ENCODE measurements at regions of chr5 and their contacts with region 1.

Region 1: DNA sequence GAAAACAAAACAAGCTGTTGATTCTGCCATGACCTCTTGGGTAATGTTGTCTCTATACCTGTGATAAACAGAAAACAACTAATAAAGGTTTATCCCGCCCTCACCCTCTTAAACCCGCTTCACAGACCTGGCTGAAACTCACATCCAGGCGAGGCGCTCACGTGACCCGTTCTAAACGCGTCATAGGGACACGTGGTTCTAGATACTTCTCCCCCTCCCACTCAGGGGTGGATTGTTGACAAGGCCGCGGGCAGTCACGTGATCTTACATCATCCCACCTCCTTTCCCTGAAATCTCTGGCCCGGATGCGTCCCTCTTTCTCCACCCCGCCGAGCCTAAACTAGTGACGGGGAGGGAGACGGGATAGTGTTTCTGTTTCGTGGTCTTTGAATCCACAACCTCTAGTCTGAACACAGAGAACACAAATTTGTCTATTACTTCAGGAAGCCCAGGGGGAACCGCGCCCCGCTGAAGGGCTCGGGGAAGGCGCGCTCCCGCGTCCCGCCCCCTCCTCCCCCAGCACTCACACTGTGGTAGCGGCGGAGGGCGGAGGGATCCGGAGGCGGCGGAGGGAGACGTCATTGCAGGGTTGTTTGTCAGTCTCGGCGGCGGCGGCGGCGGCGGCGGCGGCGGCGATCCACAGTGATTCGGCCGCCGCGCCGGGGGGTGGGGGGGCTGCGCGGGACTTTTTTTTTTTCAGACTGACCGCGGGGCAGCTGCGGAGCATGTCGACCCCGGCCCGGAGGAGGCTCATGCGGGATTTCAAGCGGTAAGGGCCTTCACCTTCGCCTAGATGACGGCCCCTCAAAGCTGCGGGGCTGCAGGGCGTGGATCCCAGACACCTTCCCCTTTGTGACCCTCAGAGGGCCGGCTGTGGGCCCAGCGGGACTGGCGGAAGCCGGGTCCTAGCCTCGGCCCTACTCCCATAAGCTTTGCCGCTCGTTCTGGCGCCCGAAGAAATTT is at the start of gene UBE2B:
- DNase-seq: peak; percentile 97 to 99
- H3K4me3 ChIP-seq: peak within 1 kb of the TSS; percentile 79 to 89
- H3K27ac ChIP-seq: peak within 1 kb of the TSS; percentile 94 to 98
- H3K4me1 ChIP-seq: peaks cover 3 to 18% of the 10 kb centered on the region in 2 donors
- H3K27me3 ChIP-seq: no peaks in the 10 kb centered on the region
- CTCF ChIP-seq: no peak
- total RNA-seq, gene UBE2B: 42.6 TPM

Region 2: GRCh38 chr5:134225618-134226440 is 145.3 kb before region 1 on chr5 and contains the start of gene PPP2CA:
- intact Hi-C with region 1: loop called (anchors 2 kb)
- DNase-seq: peak; percentile 96 to 99
- H3K4me3 ChIP-seq: peak within 1 kb of the TSS; percentile 76 to 91
- H3K27ac ChIP-seq: peak within 1 kb of the TSS; percentile 100
- H3K4me1 ChIP-seq: peaks cover 7 to 38% of the 10 kb centered on the region in 2 donors
- H3K27me3 ChIP-seq: no peaks in the 10 kb centered on the region
- CTCF ChIP-seq: no peak
- total RNA-seq, gene PPP2CA: 26.2 TPM

Region 3: GRCh38 chr5:134648425-134649162 is 277.4 kb after region 1 on chr5 and contains the start of gene SEC24A:
- intact Hi-C with region 1: loop called (anchors 1 kb)
- DNase-seq: peak; percentile 75 to 96
- H3K4me3 ChIP-seq: peak within 1 kb of the TSS; percentile 79 to 86
- H3K27ac ChIP-seq: peak within 1 kb of the TSS; percentile 97 to 98
- H3K4me1 ChIP-seq: peaks cover 4 to 15% of the 10 kb centered on the region in 2 donors
- H3K27me3 ChIP-seq: no peaks in the 10 kb centered on the region
- CTCF ChIP-seq: no peak
- total RNA-seq, gene SEC24A: 21.2 TPM

Region 4: DNA sequence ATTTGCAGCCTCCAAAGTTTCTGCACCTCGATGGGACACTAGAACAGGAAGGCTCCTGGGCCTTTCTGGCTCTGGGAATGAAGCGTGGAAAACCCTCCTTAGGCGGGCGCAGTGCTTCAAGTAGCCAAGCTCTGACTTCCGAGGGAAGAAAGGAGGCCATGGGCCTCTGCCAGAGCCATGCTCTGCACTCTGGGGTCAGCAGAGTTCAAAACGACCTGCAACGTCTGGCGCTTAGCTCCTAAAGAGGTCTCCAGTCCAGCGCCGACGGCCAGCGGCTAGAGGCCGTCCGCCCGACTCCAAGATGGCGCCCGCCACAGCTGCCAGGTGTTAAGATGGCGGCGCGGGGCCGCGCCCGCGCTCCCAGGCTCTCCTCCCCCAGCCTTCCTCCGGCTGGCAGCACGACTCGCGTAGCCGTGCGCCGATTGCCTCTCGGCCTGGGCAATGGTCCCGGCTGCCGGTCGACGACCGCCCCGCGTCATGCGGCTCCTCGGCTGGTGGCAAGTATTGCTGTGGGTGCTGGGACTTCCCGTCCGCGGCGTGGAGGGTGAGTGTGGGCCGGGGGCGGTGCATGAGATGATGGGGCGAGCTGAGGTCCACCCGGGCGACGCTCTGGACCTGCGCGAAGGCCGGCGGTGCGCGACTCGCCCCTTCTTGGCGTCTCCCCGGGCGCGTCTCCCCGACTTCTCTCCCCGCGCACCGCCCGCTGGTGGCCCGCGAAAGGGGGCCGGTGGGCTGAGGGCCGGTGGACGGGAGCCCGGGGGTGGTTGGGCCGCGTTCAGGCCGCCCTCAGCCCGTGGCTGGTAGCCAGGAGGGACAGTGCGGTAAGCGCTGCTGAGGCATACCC is 503.1 kb after region 1 on chr5 and contains the start of gene TXNDC15:
- intact Hi-C with region 1: loop called (anchors 10 kb)
- DNase-seq: peak; percentile 47 to 93
- H3K4me3 ChIP-seq: peak within 1 kb of the TSS; percentile 94 to 96
- H3K27ac ChIP-seq: peak within 1 kb of the TSS; percentile 96 to 97
- H3K4me1 ChIP-seq: peaks cover 0 to 9% of the 10 kb centered on the region in 2 donors
- H3K27me3 ChIP-seq: no peaks in the 10 kb centered on the region
- CTCF ChIP-seq: no peak
- total RNA-seq, gene TXNDC15: 211 TPM

Measured in ascending aorta (tissue), 2 donors.